WTC11 (cell line): ENCODE measurements at regions of chr12 and their contacts with region 1.

Region 1: DNA sequence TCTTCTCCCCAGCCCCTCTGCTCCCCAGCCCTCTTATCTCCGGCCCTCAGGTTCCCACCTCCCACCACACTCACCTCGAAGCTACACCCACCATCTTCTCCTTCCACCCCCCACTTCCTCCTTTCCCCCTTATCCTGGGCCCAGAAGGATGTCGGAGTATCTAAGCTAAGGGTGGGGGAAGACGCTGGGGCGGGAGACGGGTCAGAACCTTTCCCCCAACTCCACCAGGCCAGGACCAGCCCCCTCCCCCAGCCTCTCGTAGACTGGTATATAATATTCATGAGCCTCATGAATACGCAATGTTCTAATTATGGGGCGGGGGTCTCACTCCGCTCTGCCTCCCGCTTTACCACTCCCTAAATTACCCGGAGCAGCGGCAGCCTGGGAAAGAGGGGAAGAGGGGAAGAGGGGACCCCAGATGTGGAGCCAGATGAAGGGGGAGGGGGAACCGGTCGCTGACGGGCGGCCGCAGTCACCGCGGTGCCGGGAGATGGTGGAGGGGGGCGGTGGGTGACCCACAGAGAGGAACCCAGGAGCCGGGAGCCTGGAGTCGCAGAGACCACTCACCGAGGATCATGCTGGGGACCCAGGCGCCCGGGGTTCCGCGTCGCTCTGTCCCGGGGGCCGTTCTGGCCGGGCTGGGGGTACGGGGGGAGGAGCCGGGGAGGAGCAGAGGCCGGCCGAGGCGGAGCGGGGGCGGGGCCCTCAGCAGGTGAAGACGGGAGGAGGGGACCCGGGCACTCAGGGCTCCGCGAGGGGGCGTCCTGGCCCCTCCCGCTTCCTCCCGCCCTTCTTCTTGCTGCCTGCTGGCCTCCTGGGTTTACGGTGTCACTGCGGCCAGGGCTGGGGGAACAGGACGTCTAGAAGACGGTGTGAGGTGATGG is 6.4 kb upstream of the ZNF385A start:
- DNase-seq: peak; percentile 85
- ATAC-seq: peak; percentile 69
- H3K4me3 Mint-ChIP-seq: peak overlapping the region; percentile 83
- H3K27ac Mint-ChIP-seq: no peak overlapping the region
- H3K4me1 Mint-ChIP-seq: peaks cover 68% of the 10 kb centered on the region
- H3K27me3 Mint-ChIP-seq: peaks cover 19% of the 10 kb centered on the region
- CTCF ChIP-seq: no peak

Region 2: DNA sequence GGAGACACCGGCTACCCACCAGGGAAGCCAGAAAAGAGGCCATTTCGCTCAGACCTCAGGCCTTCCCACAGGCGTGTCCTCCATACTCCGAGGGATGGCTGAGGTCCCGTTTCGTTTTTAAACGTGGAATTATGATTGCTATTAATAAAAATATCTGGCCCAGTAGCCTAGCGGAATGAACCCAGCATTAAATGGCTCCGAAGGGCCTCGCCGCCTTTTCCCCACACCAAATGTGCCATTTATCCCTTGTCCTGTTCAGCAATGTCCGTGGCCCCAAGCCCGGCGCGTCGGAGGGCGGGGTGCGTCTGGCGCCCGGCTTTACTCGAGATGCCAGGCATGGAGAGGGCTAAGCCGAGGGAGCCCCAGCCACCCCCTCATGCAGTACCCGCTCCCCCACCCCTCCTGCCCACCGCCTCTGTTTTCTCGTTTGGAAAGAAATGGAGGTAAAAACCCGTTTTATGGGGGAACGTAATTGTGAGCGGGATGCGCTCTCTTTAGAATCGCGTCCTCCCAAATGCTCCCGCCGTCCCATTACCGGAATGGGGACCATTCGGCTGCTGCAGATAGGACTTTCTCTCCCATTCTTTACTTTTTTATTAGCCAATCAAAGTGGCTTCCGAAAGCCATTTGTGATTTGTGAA is 376.4 kb before region 1 on chr12:
- CTCF ChIA-PET with region 1: no interaction called
- POLR2A ChIA-PET with region 1: no interaction called
- DNase-seq: no peak
- ATAC-seq: no peak
- H3K4me3 Mint-ChIP-seq: no peak overlapping the region
- H3K27ac Mint-ChIP-seq: no peak overlapping the region
- H3K4me1 Mint-ChIP-seq: peaks cover 29% of the 10 kb centered on the region
- H3K27me3 Mint-ChIP-seq: peaks cover 99% of the 10 kb centered on the region
- CTCF ChIP-seq: no peak

Region 3: DNA sequence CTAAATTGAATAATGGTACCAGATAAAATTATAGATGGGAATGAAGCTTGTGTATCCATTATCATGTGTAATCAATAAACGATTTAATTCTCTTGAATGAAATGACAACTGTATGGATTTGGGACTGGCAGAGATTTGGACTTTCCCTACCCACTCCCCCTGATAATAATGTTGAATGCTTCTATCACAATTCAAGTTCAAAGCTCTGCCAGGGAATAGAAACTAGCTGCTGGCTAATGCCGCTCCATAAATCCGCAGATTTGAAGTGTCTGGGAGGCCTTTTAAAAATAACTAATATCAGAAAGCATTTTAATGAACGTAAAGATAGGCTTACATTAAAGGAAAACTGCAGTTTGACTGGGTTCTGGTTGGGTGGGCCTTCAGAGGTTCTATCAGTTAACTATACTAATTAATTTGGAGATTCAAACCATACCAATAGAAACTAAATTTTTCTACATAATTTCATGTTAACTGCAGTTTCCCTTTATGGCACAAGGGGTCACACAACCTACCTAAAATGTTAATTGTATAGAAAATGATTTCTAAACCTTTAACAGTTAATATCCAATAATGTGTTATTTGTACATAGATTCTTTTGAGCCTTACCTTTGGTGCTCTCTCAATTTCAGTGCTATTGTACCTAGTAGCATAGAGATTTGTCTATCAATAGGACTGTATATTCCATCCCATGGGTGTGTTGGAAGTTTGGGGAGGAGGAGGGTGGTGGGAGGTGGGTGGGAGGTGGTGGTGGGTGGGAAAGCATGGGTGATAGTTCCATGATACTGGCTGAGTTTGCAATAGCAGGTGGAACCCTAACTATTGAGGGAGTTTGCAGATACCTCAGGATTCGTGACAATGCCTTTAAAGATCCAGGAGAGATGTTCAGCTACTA is 105.5 kb before region 1 on chr12:
- CTCF ChIA-PET with region 1: no interaction called
- POLR2A ChIA-PET with region 1: no interaction called
- DNase-seq: no peak
- ATAC-seq: no peak
- H3K4me3 Mint-ChIP-seq: peak overlapping the region; percentile 10
- H3K27ac Mint-ChIP-seq: peak overlapping the region; percentile 81
- H3K4me1 Mint-ChIP-seq: peaks cover 41% of the 10 kb centered on the region
- H3K27me3 Mint-ChIP-seq: no peaks in the 10 kb centered on the region
- CTCF ChIP-seq: no peak

Region 4: DNA sequence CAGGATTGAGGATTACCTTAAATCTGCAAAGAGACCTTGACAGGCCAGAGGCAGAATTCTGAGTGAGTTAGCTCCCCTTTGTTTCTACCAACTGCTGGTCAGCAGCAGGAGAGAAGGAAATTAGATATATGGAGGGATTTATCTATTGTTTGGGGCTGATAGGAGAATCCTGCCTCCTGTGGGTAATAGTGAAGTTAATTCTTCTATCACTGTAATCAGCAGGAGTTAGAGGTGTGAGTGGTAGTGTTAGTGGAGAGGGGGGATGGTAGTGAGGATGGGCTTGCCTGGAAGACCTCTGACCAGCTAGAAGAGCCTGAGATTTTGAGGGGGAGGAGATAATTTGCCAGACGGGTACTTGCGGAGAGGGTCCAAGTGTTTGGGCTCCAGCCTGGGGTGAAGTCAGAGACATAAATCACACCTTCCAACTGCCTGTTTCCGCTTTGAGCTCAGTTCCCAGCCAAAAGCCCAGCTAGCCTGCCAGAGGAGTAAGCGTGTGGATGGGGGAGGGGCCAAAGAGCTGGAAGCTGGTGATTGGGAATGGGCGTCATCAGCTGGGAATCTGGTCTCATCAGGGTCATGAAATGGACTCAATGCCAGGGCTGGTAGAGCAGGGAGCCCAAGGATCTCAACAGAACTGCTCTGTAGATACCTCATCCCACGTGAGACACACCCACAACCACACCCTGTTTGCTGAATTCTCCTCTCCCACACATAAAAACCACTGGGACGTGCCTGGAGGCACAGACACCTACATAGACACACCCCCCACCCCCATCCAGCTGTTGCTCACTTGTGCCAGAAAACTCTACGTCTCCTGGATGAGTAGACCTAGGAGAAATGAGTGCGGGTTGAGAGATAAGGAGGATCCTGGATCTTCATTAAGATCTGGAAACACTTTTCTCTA is 41.3 kb after region 1 on chr12:
- CTCF ChIA-PET with region 1: interaction called, 361 read pairs
- POLR2A ChIA-PET with region 1: no interaction called
- DNase-seq: peak; percentile 60
- ATAC-seq: peak; percentile 63
- H3K4me3 Mint-ChIP-seq: peak overlapping the region; percentile 5; the same call in 1 of the 2 replicates
- H3K27ac Mint-ChIP-seq: no peak overlapping the region
- H3K4me1 Mint-ChIP-seq: peaks cover 43% of the 10 kb centered on the region
- H3K27me3 Mint-ChIP-seq: peaks cover 94% of the 10 kb centered on the region
- CTCF ChIP-seq: no peak